ENCODE measurements at regions of chr16 and their contacts with region 1.

Region 1: DNA sequence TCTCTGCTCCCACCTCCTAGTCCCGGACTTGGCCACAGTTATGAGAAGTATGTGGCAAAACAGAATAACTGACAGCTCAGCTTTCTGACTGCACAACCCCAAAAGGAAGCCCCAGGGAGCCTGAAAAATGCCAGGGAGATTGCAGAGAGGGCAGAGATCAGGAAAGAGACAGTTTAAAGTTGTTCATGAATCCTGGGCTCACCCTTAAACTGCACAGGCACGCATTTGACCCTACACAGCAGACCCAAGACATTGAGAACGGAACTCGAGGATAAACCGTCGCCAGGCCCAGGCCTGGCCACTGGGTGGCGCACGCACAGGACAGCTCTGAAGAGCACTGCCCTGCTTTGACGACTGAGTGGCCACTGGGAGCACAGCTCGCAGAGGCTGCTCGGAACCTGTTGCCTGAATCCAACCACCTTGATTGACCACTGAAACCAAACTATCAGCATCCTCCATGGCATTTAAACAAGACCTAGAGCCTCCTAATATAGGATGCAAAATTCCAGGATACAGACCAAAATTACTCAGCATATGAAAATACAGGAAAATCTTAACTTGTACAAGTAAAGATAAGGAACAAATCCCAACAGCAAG is 114.0 kb downstream of the C16orf95 start:
- DNase-seq: peak; percentile 70
- ATAC-seq: peak; percentile 79
- H3K4me3 Mint-ChIP-seq: no peak overlapping the region
- H3K27ac Mint-ChIP-seq: no peak overlapping the region
- H3K4me1 Mint-ChIP-seq: no peaks in the 10 kb centered on the region
- H3K27me3 Mint-ChIP-seq: peaks cover 12% of the 10 kb centered on the region
- CTCF ChIP-seq: peak; percentile 67

Region 2: GRCh38 chr16:87278191-87279095 is 75.3 kb after region 1 on chr16:
- CTCF ChIA-PET with region 1: interaction called, 12 read pairs
- POLR2A ChIA-PET with region 1: no interaction called
- intact Hi-C with region 1: loop called (anchors 2 kb)
- DNase-seq: peak; percentile 68
- ATAC-seq: peak; percentile 79
- H3K4me3 Mint-ChIP-seq: no peak overlapping the region
- H3K27ac Mint-ChIP-seq: no peak overlapping the region
- H3K4me1 Mint-ChIP-seq: no peaks in the 10 kb centered on the region
- H3K27me3 Mint-ChIP-seq: peaks cover 9% of the 10 kb centered on the region
- CTCF ChIP-seq: peak; percentile 85

Measured in activated CD8-positive, alpha-beta T cell treated with anti-CD3 and anti-CD28 coated beads for 36 hours (primary cell).